ENCODE measurements at regions of chr11 and their contacts with region 1.

Region 1: DNA sequence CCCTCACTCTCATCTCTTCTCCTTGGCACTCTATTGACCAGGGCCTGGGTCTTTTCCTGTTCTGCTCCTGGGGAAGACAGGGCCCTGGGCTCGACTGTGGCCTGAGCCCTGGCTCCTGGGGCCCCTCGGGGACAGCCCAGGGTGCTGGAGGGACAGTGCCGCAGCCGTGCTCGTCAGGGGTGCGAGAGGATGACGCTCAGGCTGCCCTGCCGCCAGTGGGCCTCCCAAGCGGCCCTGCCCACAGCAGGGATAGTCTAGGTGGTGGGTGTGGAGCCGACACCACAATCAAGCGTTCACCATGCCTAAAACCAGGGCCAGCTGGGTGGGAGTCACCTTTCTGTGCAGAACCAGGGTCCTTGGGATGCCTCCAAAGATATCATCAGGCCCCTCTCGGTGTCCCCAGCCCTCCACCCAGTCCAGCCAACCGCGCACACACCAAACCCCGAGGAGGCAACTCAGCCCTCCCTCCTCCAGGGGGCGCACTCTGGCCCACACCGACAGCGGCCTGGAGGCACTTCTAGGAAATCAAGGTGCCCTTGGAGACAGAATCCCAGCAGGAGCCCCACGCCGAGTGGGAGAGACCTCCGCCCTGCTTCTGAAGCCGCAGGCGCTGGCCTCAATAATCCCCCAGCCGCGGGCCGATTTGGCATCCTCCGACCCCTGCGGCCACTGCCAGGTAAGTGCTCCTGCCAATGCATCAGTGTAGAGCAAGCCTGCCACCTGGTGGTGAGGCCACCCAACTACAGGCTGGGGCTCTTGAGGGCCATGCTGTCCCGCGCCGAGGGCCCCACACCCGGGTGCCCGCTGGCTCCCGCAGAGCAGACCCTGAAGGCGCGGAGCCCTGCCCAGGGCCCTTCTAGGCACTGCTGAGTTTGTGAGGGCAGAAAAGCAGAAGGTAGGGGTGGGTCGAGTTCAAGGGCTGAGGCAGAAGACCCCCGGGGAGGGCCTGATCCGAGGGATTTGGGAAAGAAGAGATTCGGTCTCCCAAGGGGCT is 496.4 kb downstream of the BUD13 start:
- DNase-seq: peak; percentile 55

Region 2: DNA sequence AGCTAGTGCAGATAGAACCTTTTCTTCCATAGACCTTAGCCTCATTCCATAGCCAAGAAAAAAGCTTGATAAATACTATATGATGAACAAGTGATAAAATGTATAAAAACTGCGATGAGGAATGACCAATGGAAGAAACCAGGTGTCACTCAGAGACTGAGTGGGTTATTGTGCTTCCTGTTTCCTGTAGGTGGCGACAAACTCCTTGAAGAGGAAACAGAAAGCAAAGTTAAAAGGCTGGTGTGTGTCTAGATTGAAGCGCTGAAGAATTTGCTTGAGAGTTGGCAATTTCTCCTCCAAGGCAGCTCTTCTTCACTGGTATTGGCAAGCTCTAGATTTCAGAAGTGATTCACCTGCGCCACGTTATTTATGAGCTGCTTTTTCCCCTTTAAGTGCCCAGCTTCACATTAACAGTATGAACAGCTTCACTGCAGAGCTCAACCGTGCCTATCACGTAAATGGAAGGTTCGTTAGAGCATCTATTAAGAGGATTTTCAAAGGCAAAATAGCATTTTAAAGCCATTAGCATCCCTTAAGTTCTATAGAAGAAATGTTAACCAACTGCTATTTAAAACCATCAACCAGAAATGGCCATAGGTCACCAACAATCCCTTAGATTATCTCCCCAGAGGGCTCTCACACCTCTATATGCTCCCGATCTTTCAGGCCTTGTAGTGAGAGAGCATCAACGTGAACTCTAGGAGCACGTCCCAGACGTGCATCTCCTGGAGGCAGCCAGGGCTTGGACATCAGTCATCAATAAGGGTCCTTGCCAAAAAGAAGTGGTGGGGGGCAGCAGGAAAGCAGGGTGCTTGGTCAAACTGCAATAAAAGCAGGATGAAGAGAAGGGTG is 951.5 kb before region 1 on chr11:
- in situ Hi-C with region 1: loop called (anchors 25 kb)
- DNase-seq: peak; percentile 57

Measured in KBM-7 (cell line).